Activated CD4-positive, alpha-beta T cell treated with anti-CD3 and anti-CD28 coated beads for 36 hours (primary cell): ENCODE measurements at regions of chr13 and their contacts with region 1.

Region 1: GRCh38 chr13:83867708-83868107 is 14.6 kb downstream of the SLITRK1 start:
- DNase-seq: no peak
- ATAC-seq: no peak
- H3K4me3 Mint-ChIP-seq: no peak overlapping the region
- H3K27ac Mint-ChIP-seq: no peak overlapping the region
- H3K4me1 Mint-ChIP-seq: no peaks in the 10 kb centered on the region
- H3K27me3 Mint-ChIP-seq: peaks cover 2% of the 10 kb centered on the region

Region 2: GRCh38 chr13:83815598-83815997 is 52.1 kb before region 1 on chr13:
- CTCF ChIA-PET with region 1: no interaction called
- POLR2A ChIA-PET with region 1: interaction called, 14 read pairs
- intact Hi-C with region 1: no loop called
- DNase-seq: no peak
- ATAC-seq: no peak
- H3K4me3 Mint-ChIP-seq: no peak overlapping the region
- H3K27ac Mint-ChIP-seq: no peak overlapping the region
- H3K4me1 Mint-ChIP-seq: no peaks in the 10 kb centered on the region
- H3K27me3 Mint-ChIP-seq: no peaks in the 10 kb centered on the region

Region 3: DNA sequence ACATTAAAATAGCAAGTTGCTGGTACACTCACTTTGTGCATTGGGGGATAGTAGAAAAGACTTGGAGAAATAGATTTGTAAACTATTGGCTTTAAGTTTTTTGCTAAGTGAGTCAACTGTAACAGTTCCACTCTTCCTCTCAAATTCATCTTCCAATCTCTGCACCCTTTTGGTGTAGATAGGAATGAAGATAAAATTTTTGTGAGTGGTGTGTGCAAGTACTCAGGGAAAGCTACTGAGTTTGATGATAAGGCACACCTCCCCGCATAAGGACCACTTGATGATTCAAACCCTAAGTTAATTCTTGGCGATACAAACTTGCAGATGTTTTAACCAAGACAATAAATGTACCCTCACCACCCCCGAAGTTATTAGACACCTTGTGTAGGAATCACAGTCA is 182.8 kb after region 1 on chr13:
- CTCF ChIA-PET with region 1: no interaction called
- POLR2A ChIA-PET with region 1: no interaction called
- intact Hi-C with region 1: no loop called
- DNase-seq: no peak
- ATAC-seq: no peak
- H3K4me3 Mint-ChIP-seq: no peak overlapping the region
- H3K27ac Mint-ChIP-seq: no peak overlapping the region
- H3K4me1 Mint-ChIP-seq: no peaks in the 10 kb centered on the region
- H3K27me3 Mint-ChIP-seq: no peaks in the 10 kb centered on the region

Region 4: DNA sequence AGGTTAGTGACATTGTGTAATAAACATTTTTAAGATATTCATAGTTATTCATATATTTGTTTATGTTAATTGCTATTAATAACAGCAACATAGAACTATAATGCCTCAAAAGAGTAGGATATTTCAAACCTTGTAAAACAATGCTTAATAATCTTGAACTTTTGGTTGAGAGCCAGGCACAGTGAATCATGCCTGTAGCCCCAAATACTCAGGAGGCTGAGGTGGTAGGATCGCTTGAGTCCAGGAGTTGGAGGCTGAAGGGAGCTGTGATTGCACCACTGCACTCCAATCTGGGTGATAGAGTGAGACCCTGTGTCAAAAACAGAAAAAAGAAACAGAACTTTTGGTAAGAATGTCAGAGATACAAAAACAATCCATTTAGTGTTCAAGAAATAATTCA is 228.5 kb after region 1 on chr13:
- CTCF ChIA-PET with region 1: no interaction called
- POLR2A ChIA-PET with region 1: no interaction called
- intact Hi-C with region 1: no loop called
- DNase-seq: no peak
- ATAC-seq: no peak
- H3K4me3 Mint-ChIP-seq: no peak overlapping the region
- H3K27ac Mint-ChIP-seq: no peak overlapping the region
- H3K4me1 Mint-ChIP-seq: no peaks in the 10 kb centered on the region
- H3K27me3 Mint-ChIP-seq: no peaks in the 10 kb centered on the region

Region 5: GRCh38 chr13:84571264-84571663 is 703.6 kb after region 1 on chr13:
- CTCF ChIA-PET with region 1: no interaction called
- POLR2A ChIA-PET with region 1: no interaction called
- intact Hi-C with region 1: no loop called
- DNase-seq: no peak
- ATAC-seq: no peak
- H3K4me3 Mint-ChIP-seq: no peak overlapping the region
- H3K27ac Mint-ChIP-seq: no peak overlapping the region
- H3K4me1 Mint-ChIP-seq: no peaks in the 10 kb centered on the region
- H3K27me3 Mint-ChIP-seq: no peaks in the 10 kb centered on the region